ENCODE measurements at regions of chr10 and their contacts with region 1.

Region 1: DNA sequence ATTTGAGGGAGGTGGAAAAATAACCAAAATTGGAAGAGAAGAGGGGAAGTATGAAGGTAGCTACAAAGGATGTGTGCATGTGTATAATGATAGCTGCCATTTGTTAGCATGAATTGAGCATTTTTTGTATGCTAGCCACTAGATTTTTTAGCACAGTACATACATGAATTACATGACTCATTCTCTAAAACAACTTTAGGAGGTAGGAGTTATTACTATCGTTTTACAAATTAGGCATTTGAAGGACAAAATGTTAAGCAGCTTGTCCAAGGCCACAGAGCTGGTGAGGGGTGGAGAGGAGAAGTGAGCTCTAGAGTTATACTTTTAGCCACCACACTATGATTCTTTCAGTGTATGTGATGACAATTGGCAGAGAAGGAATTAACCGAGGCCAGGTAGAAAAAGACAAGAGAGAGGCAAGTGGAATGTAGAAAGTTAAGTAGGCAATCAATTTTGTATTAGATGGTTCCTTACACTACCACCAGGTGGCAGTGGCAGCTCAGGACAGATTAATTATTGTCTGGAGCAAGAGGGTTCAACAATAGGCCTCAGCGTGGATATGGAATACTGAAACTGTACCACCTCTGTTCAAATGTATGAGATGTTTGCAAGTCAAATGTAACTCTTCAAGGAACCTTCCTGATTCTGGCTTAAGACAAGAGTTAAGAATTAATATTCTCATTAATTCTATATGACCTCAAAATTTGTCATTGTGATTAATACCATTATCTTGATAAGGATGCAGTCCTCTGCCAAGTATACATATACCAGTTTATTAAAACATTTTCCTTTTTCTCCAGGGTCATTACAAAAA is 128.0 kb downstream of the MBL2 start:
- DNase-seq: no peak
- H3K4me3 ChIP-seq: no peak overlapping the region
- CTCF ChIP-seq: peak; percentile 64

Region 2: GRCh38 chr10:52474265-52474664 is 170.3 kb before region 1 on chr10:
- CTCF ChIA-PET with region 1: no interaction called
- POLR2A ChIA-PET with region 1: no interaction called
- DNase-seq: no peak
- H3K4me3 ChIP-seq: no peak overlapping the region
- CTCF ChIP-seq: no peak

Region 3: GRCh38 chr10:52621635-52622079 is 22.9 kb before region 1 on chr10:
- CTCF ChIA-PET with region 1: interaction called, 51 read pairs
- POLR2A ChIA-PET with region 1: interaction called, 3 read pairs
- DNase-seq: no peak
- H3K4me3 ChIP-seq: no peak overlapping the region
- CTCF ChIP-seq: no peak

Region 4: DNA sequence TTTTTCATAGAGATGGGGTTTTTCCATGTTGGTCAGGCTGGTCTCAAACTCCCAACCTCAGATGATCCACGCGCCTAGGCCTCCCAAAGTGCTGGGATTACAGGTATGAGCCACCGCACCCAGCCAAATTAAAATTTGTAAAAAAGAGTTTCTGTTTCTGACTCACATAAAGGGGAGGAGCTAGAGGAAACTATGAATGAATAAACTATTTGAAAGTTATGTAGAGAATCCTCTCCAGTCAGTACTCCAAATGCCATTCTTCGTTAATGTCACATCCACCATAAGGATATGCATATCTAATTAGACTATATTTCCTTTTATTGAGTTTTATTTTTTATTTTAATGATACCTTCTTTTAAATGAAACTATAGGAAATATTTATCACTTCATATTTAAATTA is 75.4 kb after region 1 on chr10:
- CTCF ChIA-PET with region 1: interaction called, 15 read pairs
- POLR2A ChIA-PET with region 1: no interaction called
- DNase-seq: no peak
- H3K4me3 ChIP-seq: no peak overlapping the region
- CTCF ChIP-seq: no peak

Region 5: DNA sequence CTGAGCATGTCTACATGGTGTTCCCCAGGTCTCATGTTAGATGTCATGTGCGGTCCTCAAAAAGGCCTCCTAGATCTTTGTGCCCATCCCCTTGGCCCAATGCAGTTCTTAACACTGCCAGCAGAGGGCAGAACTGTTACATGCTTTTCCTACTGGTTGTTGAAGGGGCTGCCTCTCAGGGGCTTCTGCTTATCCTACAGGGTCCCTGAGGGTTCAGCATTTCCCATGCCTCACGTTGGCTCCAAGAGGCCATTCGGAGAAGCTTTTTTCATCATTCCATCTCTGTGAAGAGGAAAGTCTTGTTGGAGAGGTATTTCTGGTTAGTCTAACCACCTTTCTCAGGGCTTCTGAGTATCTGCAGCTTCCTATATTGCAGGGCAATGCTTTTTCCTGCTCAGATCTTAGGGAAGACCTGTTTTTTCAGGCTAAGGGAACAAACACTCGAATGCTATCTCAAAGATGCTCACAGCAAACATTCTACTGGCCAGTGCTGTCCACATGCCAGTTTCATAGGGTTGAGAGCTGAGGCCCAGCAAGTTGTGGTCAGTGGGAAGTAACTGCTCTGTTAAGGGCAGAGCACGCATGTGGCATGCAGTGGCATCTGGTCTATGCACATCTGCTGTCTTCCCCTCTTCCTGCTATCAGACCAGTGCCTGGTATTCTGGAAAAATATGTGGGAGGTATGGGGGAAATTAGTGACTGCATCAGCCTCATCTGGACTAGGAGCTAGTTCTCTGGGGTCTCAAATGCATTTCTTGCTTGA is 96.5 kb after region 1 on chr10:
- CTCF ChIA-PET with region 1: interaction called, 112 read pairs
- POLR2A ChIA-PET with region 1: no interaction called
- DNase-seq: no peak
- H3K4me3 ChIP-seq: no peak overlapping the region
- CTCF ChIP-seq: peak; percentile 77

Region 6: DNA sequence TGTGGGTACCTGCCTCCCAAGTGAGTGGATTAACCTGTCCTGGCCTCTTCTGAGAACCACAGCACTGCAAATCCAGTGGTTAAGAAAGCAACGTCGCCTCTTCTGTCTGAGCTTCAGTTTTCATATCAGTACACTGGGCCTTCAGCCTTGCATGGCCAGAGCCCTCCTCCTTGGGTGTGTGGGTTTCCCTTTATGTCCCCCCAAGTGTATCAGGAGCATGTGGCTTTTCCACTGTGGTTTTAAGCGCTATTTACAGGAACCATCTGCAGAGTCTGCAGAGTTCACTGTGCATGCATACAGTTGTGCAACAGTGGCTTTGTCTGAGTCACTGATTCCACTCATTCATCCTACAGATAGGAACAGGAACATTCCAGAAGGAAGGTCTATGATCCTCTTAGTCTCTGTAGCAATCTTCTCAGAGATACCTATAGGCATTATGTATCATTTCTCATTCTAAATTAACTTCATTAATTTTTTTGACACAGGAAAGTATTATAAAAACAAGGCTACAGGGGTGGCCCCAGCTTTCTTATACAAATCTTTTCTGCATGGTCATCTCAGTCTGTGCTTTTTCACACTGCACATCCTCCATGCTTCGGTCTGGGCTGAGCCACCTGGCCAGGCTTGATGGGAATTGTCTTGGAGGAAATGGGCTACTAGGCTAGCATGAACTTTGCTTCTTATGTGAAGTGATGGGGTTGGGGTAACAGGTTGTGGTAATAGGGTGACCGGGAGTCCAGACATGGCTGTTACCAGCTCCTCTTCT is 110.9 kb after region 1 on chr10:
- CTCF ChIA-PET with region 1: interaction called, 10 read pairs
- POLR2A ChIA-PET with region 1: no interaction called
- DNase-seq: peak; percentile 47
- H3K4me3 ChIP-seq: no peak overlapping the region
- CTCF ChIP-seq: no peak